RWPE1 (cell line): ENCODE measurements at regions of chr2 and their contacts with region 1.

Region 1: GRCh38 chr2:9770308-9771100 is 72.8 kb upstream of the TAF1B start:
- DNase-seq: peak; percentile 67
- H3K27ac ChIP-seq: peak overlapping the region; percentile 85
- CTCF ChIP-seq: peak; percentile 69

Region 2: DNA sequence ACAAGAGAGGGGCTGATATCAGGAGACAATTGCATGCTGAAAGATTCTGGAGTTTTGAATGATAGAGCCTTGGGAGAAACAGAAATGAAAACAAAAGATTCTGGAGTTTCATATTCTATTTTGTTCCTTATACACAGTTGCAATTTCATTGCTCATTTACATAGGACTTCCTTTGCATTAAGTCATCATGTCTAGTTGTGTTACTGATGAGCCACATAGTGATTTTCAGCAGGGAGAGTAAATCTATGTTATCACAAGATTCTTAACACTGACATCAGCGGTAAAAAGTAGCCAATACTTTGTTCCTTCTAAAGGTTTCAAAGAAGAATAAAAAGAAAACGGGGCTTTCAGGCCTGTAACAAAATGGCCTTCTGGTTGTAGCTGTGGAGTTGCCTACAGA is 222.0 kb before region 1 on chr2:
- CTCF ChIA-PET with region 1: no interaction called
- POLR2A ChIA-PET with region 1: no interaction called
- DNase-seq: no peak
- H3K27ac ChIP-seq: no peak overlapping the region
- CTCF ChIP-seq: no peak

Region 3: GRCh38 chr2:9753276-9753600 is 17.3 kb before region 1 on chr2:
- CTCF ChIA-PET with region 1: interaction called, 23 read pairs
- POLR2A ChIA-PET with region 1: interaction called, 3 read pairs
- DNase-seq: peak; percentile 88
- H3K27ac ChIP-seq: peak overlapping the region; percentile 99
- CTCF ChIP-seq: no peak

Region 4: DNA sequence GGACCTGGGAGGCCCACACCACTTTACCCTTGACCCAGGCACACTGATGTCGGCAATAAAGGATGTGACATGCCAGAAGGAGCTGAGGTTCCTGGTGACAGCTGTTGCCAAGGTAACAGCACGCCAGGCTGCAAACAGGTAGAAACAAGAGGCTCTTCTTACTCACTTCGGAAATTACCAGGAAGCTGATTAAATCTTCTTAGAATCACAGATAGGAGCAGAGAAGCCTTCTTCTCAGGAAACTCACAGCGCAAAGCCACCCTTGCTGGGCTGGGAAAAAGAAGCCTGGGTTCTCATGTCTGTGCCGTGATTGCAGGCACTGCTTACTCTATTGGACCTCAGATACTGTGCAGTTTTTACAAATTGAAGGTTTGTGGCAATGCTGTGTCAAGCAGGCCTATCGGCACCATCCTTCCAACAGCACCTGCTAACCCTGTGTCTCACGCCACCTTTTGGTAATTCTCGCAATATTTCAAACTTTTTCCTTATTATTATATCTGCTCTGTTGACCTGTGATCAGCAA is 11.8 kb after region 1 on chr2:
- CTCF ChIA-PET with region 1: interaction called, 11 read pairs
- POLR2A ChIA-PET with region 1: no interaction called
- DNase-seq: peak; percentile 78
- H3K27ac ChIP-seq: peak overlapping the region; percentile 93
- CTCF ChIP-seq: no peak

Region 5: GRCh38 chr2:9799665-9800632 is 29.4 kb after region 1 on chr2:
- CTCF ChIA-PET with region 1: interaction called, 19 read pairs
- POLR2A ChIA-PET with region 1: no interaction called
- DNase-seq: peak; percentile 83
- H3K27ac ChIP-seq: peak overlapping the region; percentile 100
- CTCF ChIP-seq: peak; percentile 97

Region 6: GRCh38 chr2:9914384-9915065 is 144.0 kb after region 1 on chr2:
- CTCF ChIA-PET with region 1: interaction called, 10 read pairs
- POLR2A ChIA-PET with region 1: interaction called, 3 read pairs
- DNase-seq: peak; percentile 78
- H3K27ac ChIP-seq: peak overlapping the region; percentile 59
- CTCF ChIP-seq: peak; percentile 54